ENCODE measurements at regions of chr5 and their contacts with region 1.

Region 1: DNA sequence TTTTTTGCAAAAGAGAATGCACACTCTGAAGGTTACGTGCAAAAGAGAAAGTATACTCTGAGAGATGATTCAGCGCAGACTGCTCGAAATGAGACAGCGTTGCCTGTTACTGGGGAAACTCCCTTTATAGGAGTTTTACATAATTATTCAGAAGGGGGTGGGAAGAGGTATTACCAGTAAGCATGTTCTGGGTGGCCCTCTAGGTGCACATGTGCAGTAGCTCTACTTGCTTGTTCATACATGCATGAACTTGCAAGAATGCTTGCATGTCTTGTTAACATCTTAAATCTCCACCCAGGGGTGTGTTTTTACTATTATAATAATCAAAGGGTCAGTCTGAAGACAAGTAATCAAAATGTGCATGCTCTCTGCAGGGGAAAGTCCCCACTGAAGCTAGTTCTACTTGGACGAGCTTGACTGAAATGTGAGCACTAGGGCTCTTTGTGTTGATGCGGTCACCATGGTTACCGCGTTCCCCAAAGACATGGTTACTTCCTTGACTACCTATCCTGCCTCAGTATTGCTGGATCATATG is 75.5 kb downstream of the SGCD start:
- DNase-seq: peak; percentile 84
- H3K4me3 Mint-ChIP-seq: peak overlapping the region; percentile 13
- H3K27ac Mint-ChIP-seq: peak overlapping the region; percentile 21
- H3K4me1 Mint-ChIP-seq: peaks cover 16% of the 10 kb centered on the region
- H3K27me3 Mint-ChIP-seq: peaks cover 6% of the 10 kb centered on the region

Region 2: DNA sequence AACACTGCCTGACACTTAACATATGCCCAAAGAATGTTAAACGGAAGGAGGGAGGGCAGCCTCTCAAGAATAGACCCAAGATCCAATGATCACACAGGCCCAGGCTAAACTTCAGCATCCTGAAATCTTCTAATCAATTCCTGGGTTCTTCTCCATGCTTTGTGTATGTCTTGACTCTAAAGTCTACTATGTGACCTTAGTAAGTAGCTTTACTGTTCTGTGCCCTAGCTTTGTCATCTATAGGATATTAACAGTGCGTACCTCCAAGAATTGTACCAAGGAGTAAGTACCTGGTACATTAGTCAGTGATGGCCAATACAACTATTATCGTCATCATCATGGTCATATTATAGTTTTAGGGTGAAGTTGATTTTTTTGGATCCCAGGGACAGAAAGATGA is 21.1 kb after region 1 on chr5:
- CTCF ChIA-PET with region 1: no interaction called
- POLR2A ChIA-PET with region 1: no interaction called
- intact Hi-C with region 1: loop called (anchors 2 kb)
- DNase-seq: no peak
- H3K4me3 Mint-ChIP-seq: no peak overlapping the region
- H3K27ac Mint-ChIP-seq: no peak overlapping the region
- H3K4me1 Mint-ChIP-seq: no peaks in the 10 kb centered on the region
- H3K27me3 Mint-ChIP-seq: peaks cover 2% of the 10 kb centered on the region

Region 3: GRCh38 chr5:156479849-156480248 is 77.4 kb after region 1 on chr5:
- CTCF ChIA-PET with region 1: no interaction called
- POLR2A ChIA-PET with region 1: no interaction called
- intact Hi-C with region 1: loop called (anchors 1 kb)
- DNase-seq: peak; percentile 52
- H3K4me3 Mint-ChIP-seq: no peak overlapping the region
- H3K27ac Mint-ChIP-seq: peak overlapping the region; percentile 42
- H3K4me1 Mint-ChIP-seq: peaks cover 5% of the 10 kb centered on the region
- H3K27me3 Mint-ChIP-seq: no peaks in the 10 kb centered on the region

Region 4: DNA sequence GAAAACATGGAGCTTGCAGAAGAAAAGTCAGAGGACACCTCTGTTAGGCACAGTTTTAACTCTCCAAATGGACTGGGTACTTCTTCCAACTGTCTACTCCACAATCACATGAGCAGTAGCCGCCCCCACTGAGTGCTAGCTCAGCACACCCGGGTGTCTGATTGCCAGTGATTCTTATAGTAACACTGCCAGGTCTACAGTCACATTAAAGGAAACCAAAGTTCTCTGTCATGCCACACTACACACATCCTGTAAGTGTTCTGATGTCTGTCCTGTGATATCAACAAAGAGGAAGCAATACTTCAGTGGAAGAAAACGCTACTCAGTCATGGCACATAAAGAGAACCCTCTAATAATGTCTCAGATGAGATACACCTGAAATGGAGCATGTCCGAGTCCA is 706.5 kb after region 1 on chr5 and contains the start of gene HAVCR2:
- CTCF ChIA-PET with region 1: no interaction called
- POLR2A ChIA-PET with region 1: no interaction called
- intact Hi-C with region 1: loop called (anchors 10 kb)
- DNase-seq: peak; percentile 84
- H3K4me3 Mint-ChIP-seq: peak within 1 kb of the TSS; percentile 79
- H3K27ac Mint-ChIP-seq: peak within 1 kb of the TSS; percentile 95
- H3K4me1 Mint-ChIP-seq: peaks cover 40% of the 10 kb centered on the region
- H3K27me3 Mint-ChIP-seq: no peaks in the 10 kb centered on the region
- total RNA-seq, gene HAVCR2: 23.2 to 24.3 TPM